MCF 10A (cell line): ENCODE measurements at regions of chr15 and their contacts with region 1.

Region 1: DNA sequence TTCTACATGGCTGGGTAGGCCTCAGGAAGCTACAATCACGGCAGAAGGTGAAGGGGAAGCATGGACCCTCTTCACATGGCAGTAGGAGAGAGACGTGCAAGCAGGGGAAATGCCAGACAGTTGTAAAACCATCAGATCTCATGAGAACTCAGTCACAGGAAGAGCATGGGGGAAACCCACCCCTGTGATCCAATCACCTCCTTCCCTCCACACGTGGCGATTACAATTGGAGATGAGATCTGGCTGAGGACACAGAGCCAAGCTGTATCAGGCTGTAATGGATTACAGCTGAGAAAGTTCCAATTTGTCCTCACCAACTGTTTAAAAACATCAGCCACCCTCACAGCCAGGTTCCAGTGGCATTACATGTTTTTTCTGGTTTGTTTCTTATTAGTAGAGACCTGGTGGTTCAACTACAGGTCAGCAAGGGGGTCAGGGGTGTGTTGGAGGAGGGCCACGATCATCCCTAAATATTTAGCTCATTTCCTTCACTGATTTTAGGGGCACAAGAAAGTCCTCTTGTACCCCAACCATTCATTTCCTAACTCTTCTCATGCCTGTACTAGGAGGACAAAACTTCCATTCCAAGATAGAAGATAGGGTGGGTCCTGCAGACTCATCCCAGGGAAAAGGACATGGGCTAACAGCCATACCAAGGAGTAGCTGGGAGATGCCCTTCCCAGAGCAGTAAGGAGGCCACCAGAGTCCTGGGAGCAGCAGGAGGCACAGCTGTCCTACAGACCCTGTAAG is 54.4 kb downstream of the ANXA2 start:
- DNase-seq: no peak
- H3K4me3 Mint-ChIP-seq: no peak overlapping the region
- H3K27ac Mint-ChIP-seq: peak overlapping the region; percentile 63
- H3K4me1 Mint-ChIP-seq: peaks cover 30% of the 10 kb centered on the region
- H3K27me3 Mint-ChIP-seq: no peaks in the 10 kb centered on the region
- CTCF ChIP-seq: no peak

Region 2: GRCh38 chr15:60212536-60212935 is 130.9 kb before region 1 on chr15:
- CTCF ChIA-PET with region 1: no interaction called
- POLR2A ChIA-PET with region 1: no interaction called
- intact Hi-C with region 1: no loop called
- DNase-seq: peak; percentile 25
- H3K4me3 Mint-ChIP-seq: no peak overlapping the region
- H3K27ac Mint-ChIP-seq: no peak overlapping the region
- H3K4me1 Mint-ChIP-seq: peaks cover 13% of the 10 kb centered on the region
- H3K27me3 Mint-ChIP-seq: no peaks in the 10 kb centered on the region
- CTCF ChIP-seq: no peak

Region 3: GRCh38 chr15:60315878-60316277 is 27.5 kb before region 1 on chr15:
- CTCF ChIA-PET with region 1: no interaction called
- POLR2A ChIA-PET with region 1: no interaction called
- intact Hi-C with region 1: no loop called
- DNase-seq: no peak
- H3K4me3 Mint-ChIP-seq: no peak overlapping the region
- H3K27ac Mint-ChIP-seq: peak overlapping the region; percentile 63
- H3K4me1 Mint-ChIP-seq: peaks cover 8% of the 10 kb centered on the region
- H3K27me3 Mint-ChIP-seq: no peaks in the 10 kb centered on the region
- CTCF ChIP-seq: no peak

Region 4: DNA sequence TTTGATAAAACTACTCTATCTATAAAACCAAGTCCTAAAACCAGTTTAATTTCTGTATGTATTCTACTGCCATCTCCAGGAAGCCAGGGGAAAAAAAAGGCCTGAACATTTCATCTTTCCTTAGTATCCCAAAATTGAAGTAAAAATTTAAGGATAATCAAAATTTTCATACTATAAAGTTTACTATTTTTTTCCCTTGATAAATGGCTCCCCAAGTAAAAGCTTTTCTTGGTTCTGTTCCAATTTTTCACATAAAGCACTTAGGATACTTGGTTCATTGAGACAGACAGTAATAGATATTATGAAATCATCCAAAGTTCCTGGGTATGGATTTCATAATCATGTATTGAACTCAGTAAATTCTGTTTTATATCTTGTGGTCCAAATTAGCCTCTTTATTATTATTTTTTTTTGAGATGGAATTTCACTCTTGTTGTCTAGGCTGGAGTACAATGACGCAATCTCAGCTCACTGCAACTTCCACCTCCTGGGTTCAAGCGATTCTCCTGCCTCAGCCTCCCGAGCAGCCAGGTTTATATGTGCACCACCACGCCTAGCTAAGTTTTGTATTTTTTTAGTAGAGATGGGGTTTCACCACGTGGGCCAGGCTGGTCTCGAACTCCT is 101.0 kb after region 1 on chr15:
- CTCF ChIA-PET with region 1: interaction called, 4 read pairs
- POLR2A ChIA-PET with region 1: interaction called, 10 read pairs
- intact Hi-C with region 1: no loop called
- DNase-seq: peak; percentile 50
- H3K4me3 Mint-ChIP-seq: no peak overlapping the region
- H3K27ac Mint-ChIP-seq: peak overlapping the region; percentile 39
- H3K4me1 Mint-ChIP-seq: peaks cover 5% of the 10 kb centered on the region
- H3K27me3 Mint-ChIP-seq: no peaks in the 10 kb centered on the region
- CTCF ChIP-seq: peak; percentile 45

Region 5: DNA sequence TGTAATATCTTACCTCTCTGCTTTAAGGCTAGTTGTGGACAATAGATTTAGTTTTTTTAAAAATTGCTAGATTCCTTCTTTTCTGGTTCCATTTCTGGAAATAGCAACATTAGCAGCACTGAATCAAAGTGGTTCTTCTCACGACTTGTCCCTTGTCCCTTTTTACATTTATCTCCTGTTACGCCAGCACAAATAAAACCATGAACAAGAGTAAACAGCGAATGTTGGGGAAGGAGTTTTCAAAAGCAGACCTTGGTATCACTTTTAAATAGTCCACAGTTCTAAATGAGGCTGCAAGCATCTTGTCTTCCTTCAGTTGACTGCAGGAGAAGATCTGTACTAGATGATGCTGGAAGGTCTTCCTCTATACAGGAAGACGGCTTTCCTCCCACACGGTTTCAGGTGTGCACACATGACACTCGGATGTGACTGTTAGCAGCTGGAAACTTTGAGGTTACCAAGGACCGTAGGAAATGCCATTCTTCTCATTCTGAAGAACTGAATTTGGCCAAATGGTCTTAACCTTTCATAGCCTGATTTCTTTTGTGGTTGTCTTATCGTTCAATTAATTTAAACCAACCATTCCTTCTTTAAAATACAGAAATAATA is 386.6 kb after region 1 on chr15:
- CTCF ChIA-PET with region 1: no interaction called
- POLR2A ChIA-PET with region 1: no interaction called
- intact Hi-C with region 1: no loop called
- DNase-seq: no peak
- H3K4me3 Mint-ChIP-seq: no peak overlapping the region
- H3K27ac Mint-ChIP-seq: no peak overlapping the region
- H3K4me1 Mint-ChIP-seq: no peaks in the 10 kb centered on the region
- H3K27me3 Mint-ChIP-seq: peaks cover 20% of the 10 kb centered on the region
- CTCF ChIP-seq: no peak